IMR-90 (cell line): ENCODE measurements at regions of chr3 and their contacts with region 1.

Region 1: GRCh38 chr3:26018889-26019288 is 229.0 kb downstream of the OXSM start:
- DNase-seq: no peak
- ATAC-seq: no peak
- H3K4me3 ChIP-seq: no peak overlapping the region
- H3K27ac ChIP-seq: no peak overlapping the region
- H3K4me1 ChIP-seq: no peaks in the 10 kb centered on the region
- H3K27me3 ChIP-seq: no peaks in the 10 kb centered on the region
- CTCF ChIP-seq: no peak
- POLR2A ChIP-seq: no peak
- RAD21 ChIP-seq: no peak

Region 2: DNA sequence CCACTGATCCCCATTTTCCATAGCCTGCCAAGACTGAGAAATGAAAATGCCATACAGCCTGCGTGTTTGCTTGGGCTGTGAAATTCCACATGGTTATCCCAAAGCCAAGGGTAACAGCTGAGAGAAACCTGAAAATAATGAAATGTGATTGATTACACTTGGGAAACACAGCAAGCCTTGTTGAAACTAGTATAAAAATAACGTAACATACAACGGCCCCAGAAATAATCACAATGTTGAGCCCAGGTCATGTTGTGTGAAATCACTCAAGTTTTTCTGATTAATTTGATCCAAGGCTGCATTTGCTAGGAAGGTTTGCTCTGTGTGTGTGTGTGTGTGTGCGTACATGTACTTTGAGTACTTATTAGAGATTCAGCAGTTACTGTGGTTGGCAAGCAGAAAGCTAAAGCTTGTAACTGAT is 40.0 kb after region 1 on chr3:
- CTCF ChIA-PET with region 1: no interaction called
- POLR2A ChIA-PET with region 1: no interaction called
- dilution Hi-C with region 1: no loop called
- in situ Hi-C with region 1: no loop called
- intact Hi-C with region 1: loop called (anchors 1 kb)
- DNase-seq: no peak
- ATAC-seq: no peak
- H3K4me3 ChIP-seq: no peak overlapping the region
- H3K27ac ChIP-seq: no peak overlapping the region
- H3K4me1 ChIP-seq: no peaks in the 10 kb centered on the region
- H3K27me3 ChIP-seq: no peaks in the 10 kb centered on the region
- CTCF ChIP-seq: no peak
- POLR2A ChIP-seq: no peak
- RAD21 ChIP-seq: no peak